RWPE1 (cell line): ENCODE measurements at regions of chr3 and their contacts with region 1.

Region 1: DNA sequence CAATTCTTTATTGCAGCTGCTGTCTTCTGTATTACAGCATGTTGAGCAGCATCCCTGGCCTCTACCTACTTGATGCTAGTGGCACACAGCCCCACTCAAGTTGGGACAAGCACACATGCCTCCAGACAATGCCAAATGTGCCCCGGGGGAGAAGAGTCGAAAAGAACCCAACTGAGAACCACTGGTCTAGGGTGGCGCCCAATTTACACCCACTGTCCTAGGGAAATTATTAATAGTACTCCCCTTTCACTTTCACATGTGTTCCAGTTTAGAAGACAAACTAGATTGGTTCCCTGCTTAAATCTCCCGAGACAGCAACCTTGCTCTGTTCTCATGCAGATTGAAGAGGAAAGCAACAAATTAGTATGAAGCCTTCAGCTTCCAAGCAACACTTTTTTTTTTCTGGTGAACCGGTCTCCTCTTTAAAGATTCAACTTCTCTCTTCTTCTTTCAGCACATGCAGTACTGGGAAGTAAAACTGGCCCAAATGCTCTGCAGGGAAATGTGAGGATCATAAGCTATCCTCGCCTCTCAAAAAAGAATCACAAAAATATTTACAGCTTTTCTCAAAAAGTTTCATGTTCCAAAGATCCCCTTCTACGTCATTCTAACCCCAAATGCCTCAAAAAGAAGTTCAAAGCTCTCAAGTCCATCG is 823.9 kb upstream of the CFAP20DC start:
- DNase-seq: no peak
- H3K27ac ChIP-seq: no peak overlapping the region
- CTCF ChIP-seq: no peak

Region 2: DNA sequence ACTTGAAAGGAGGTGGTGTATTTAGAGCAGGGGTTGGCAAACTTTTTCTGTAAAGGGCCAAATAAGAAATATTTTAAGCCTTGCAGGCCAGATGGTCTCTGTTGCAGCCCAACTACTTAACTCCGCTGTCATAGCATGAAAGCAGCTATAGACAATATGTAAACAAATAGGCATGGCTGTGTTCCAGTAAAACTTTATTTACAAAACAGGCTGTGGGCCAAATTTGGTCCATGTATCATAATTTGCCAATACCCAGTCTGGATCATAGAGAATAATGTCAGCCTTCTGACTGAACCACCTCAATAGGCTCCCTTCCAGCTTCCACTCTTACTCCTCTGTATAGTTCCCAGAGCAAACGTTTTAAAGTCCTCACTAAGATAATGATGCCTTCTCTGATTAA is 185.1 kb before region 1 on chr3:
- CTCF ChIA-PET with region 1: no interaction called
- POLR2A ChIA-PET with region 1: interaction called, 11 read pairs
- DNase-seq: no peak
- H3K27ac ChIP-seq: no peak overlapping the region
- CTCF ChIP-seq: no peak

Region 3: DNA sequence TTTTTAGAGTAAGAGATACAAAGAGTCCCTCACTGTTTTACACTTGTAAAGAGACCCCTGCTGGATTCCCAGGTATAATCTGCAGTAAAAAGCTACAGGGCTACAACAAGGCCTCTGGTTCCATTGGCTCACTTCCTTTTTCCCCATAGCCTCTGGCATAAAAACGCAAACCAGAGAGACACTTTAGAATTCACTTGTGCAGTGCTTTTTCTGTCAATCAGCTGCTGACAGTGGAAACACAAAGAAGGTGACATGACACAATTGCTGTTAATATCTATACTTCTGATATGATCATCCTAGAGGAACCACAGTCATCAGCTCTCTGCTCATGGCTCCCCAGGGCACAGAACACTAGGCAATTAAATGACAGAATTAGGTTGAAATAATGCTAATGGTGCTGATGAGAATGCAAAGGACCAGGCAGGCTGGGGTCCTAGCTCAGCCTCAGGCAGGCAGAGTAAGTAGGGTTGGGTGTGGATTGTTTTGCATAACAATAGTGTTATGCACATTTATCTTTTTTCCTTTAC is 156.0 kb before region 1 on chr3:
- CTCF ChIA-PET with region 1: no interaction called
- POLR2A ChIA-PET with region 1: no interaction called
- DNase-seq: no peak
- H3K27ac ChIP-seq: no peak overlapping the region
- CTCF ChIP-seq: no peak

Region 4: GRCh38 chr3:60289341-60290121 is 415.8 kb after region 1 on chr3:
- CTCF ChIA-PET with region 1: no interaction called
- POLR2A ChIA-PET with region 1: no interaction called
- DNase-seq: no peak
- H3K27ac ChIP-seq: no peak overlapping the region
- CTCF ChIP-seq: no peak